Heart right ventricle (tissue), 16 donors: ENCODE measurements at regions of chr19 and their contacts with region 1.

Region 1: DNA sequence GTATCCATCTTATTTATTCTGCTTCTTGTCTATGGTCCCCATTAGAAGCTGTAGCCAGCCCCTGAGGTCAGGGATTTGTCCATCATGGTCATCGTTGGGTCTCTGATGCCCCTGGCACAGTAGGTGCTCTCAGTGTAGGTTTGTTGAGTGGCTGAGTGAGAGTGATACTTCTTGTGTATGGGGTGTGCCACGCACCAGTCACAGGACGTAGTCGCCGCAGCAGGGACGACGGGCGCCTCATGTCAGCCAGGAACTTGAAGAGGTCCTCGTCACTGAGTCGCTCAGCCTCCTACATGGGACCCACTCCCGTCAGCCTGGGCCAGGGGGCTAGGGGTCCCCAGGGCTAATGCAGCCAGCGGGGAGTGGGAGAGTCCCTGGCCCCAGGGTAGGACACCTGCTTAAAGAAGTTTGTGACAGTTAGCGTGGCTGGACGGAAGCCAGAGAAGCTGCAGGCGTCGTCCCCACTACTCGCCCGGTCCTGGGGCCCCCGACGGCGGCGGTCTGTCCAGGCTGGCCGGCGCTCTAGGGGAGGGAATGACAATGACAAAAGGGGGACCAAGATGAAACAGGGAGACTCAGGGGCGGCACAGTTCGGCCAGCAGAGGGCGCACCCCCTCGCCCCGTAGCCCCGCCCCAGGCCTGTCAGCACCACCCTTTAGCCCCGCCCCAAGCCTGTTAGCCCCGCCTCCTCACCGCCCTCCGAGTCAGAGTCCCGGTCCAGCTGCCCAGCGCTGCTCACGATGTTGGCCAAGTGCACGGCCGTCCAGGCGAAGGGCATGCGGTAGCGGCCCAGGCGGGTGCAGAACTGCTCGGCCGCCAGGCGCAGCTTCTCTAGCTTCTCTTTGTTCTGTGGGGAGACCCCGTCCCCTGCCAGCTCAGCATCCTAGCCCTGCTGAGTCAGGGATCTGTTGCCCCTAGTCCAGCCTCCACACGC is 3.7 kb downstream of the ANGPTL8 start:
- DNase-seq: peak; percentile 96 to 97
- ATAC-seq: peak; percentile 85 to 91 (median 90)
- H3K4me3 ChIP-seq: no peak overlapping the region
- H3K27ac ChIP-seq: peak overlapping the region in 9 of 10 donors; percentile 51 to 94 (median 78)
- H3K4me1 ChIP-seq: peaks cover 15 to 50% (median 29%) of the 10 kb centered on the region in 9 donors
- H3K27me3 ChIP-seq: no peaks in the 10 kb centered on the region
- CTCF ChIP-seq: peak; percentile 77 to 93 (median 92)

Region 2: DNA sequence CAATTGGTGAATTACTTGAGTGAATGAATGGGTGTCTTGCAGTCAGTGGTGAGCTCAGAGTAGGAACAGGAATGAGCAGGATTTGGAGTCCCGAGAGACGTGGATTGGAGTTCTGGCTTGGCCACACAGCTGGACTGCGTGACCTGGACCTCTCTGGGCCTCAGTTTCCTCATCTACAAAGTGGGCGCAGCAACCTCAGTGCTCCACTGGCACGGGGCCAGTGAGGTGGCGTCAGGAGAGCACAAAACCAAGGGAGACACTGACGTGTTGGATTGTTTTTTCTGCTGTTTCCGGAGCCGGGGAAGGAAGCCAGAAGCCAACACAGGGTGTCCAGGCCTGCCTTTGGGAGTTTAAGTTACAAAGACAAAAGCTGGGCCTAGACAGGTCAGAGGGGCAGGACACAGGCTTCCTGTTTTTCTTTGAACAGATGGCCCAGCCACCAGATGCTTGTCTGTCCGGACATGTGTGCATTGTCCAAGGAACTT is 25.7 kb after region 1 on chr19:
- intact Hi-C with region 1: loop called in 1 of 10 experiments (anchors 2 kb)
- DNase-seq: peak; percentile 76 to 93
- ATAC-seq: peak; percentile 81 to 94 (median 89)
- H3K4me3 ChIP-seq: no peak overlapping the region
- H3K27ac ChIP-seq: peak overlapping the region; percentile 60 to 99 (median 80)
- H3K4me1 ChIP-seq: peaks cover 9 to 65% (median 23%) of the 10 kb centered on the region in 9 donors
- H3K27me3 ChIP-seq: peaks cover 0 to 14% (median 0%) of the 10 kb centered on the region in 7 donors
- CTCF ChIP-seq: no peak

Region 3: DNA sequence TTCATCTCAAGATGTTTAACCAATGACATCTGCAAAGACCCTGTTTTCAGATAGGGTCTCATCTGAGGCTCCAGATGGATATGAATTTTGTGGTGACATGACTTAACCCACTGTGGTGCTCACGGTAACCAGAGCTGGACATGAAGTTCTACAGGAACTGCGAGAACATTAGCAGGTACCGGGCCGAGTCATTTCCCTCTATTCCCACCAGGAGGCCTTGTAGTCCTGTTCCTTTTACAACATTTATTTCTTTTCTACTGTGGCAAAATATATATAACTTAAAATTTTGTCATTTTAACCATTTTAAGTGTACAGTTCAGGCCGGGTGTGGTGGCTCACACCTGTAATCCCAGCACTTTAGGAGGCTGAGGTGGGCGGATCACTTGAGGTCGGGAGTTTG is 45.2 kb after region 1 on chr19:
- intact Hi-C with region 1: loop called in 7 of 10 experiments (anchors 1 to 5 kb)
- DNase-seq: no peak
- ATAC-seq: no peak
- H3K4me3 ChIP-seq: no peak overlapping the region
- H3K27ac ChIP-seq: peak overlapping the region in 1 of 10 donors; percentile 76
- H3K4me1 ChIP-seq: peaks cover 0 to 34% (median 18%) of the 10 kb centered on the region in 9 donors
- H3K27me3 ChIP-seq: peaks cover 0 to 5% (median 0%) of the 10 kb centered on the region in 7 donors
- CTCF ChIP-seq: peak in 7 of 9 donors; percentile 23 to 51 (median 37)

Region 4: DNA sequence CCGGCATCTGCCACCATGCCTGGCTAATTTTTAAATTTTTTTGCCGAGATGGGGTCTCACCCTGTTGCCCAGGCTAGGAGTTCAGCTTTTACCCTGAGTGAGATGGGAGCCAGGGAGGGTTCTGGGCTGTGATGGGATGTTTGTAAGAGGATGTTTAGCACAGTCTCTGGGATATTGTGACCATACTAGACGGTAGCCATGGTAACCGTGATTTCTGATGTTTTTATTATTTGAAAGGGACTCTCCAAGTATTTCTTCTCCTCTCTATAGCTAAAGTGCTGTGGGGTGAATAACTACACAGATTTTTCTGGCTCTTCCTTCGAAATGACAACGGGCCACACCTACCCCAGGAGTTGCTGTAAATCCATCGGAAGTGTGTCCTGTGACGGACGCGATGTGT is 63.2 kb after region 1 on chr19:
- intact Hi-C with region 1: no loop called
- DNase-seq: no peak
- ATAC-seq: no peak
- H3K4me3 ChIP-seq: no peak overlapping the region
- H3K27ac ChIP-seq: no peak overlapping the region
- H3K4me1 ChIP-seq: no peaks in the 10 kb centered on the region
- H3K27me3 ChIP-seq: no peaks in the 10 kb centered on the region
- CTCF ChIP-seq: no peak

Region 5: DNA sequence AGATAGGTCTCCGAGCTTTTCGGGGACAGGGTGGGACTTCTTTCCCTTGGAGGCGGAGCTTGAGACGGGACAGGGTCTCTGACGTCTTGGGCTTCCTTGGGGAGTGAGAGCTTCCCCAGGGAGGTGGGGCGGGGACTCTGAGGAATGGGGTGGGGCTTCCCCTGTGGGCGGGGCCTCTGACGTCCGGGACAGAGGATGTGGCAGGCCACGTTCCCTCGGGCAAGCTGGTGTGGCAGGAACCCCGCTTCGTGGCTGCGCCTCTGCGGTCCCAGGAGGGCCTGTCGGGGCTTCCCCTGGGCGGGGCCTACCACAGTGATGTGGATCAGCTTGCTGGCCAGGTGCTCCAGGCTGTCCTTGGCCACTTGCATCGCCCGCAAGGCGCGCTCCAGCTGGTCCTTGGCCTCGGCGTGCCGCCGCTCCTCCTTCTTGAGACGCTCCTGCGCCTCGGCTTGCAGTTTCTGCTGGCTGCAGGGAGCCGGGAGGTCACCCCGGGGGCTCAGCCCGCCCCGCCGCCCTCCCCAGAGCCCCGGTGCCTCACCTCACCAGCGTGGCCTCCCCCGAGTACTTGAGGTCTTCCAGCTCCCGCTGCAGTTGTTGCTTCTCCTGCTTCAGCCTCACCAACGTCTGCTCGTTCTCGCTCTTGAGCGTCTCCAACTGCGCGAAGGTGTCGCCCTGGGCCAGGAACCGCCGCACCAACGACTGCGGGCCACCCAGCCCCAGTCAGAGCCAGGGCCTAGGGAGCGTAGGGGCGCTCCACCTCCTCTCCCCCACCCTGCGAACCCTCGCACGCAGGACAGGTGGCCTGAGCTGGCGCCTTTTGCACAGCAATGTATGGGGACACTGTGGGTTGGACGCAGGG is 179.3 kb after region 1 on chr19:
- intact Hi-C with region 1: no loop called
- DNase-seq: peak; percentile 79 to 87
- ATAC-seq: peak; percentile 48 to 89 (median 74)
- H3K4me3 ChIP-seq: peak overlapping the region in 9 of 10 donors; percentile 16 to 50 (median 45)
- H3K27ac ChIP-seq: peak overlapping the region in 9 of 10 donors; percentile 20 to 82 (median 55)
- H3K4me1 ChIP-seq: peaks cover 12 to 53% (median 37%) of the 10 kb centered on the region in 9 donors
- H3K27me3 ChIP-seq: peaks cover 10 to 69% (median 64%) of the 10 kb centered on the region in 7 donors
- CTCF ChIP-seq: no peak

Region 6: DNA sequence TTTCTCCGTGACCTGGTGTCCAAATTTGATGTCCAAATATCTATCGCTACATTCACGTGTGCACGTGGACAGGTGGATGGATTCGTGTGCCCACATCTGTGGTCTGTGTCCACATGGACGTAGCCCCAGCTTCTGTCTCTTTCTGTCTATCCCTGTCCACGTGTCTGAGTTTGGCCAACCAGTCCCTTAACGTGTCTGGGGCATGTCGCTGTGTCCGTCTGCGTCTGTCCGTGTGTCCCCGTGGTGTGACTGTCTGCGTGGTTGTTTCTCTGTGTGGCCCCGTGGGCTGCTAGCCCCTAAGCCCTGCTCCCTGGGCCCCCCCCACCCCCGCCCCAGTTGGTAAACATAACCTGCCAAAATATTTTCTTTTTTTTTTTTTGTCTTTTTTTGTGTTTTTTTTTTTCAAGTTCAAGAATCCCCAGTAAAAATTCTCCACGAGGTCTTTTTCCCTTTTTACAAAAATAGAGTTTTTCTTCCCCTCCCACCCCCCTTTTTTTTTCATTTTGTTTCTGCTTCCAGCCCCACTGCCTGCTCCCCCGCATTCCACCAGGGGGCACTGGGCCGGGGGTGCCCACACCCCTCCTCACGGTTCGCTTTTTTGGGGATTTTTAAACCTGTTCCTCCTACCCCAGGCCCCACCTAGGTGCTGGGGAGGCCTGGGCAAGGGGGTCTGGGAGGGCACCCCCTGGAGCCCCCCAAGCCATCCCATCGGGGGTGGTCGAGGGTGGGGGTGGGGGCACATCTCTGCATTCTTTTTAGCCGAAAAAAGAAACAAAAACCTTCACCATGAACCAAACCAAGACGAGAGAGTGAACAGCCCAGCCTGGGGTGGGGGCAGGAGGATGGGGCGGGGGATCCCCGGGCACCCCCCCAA is 210.6 kb after region 1 on chr19:
- intact Hi-C with region 1: no loop called
- DNase-seq: no peak
- ATAC-seq: no peak
- H3K4me3 ChIP-seq: no peak overlapping the region
- H3K27ac ChIP-seq: no peak overlapping the region
- H3K4me1 ChIP-seq: peaks cover 0 to 12% (median 0%) of the 10 kb centered on the region in 9 donors
- H3K27me3 ChIP-seq: peaks cover 0 to 20% (median 8%) of the 10 kb centered on the region in 7 donors
- CTCF ChIP-seq: peak in 2 of 9 donors; percentile 15 to 21